Heart left ventricle (tissue), 16 donors: ENCODE measurements at regions of chr21 and their contacts with region 1.

Region 1: GRCh38 chr21:40615505-40616376 is 231.2 kb downstream of the DSCAM start:
- DNase-seq: no peak
- ATAC-seq: no peak
- H3K4me3 ChIP-seq: no peak overlapping the region
- H3K27ac ChIP-seq: no peak overlapping the region
- H3K4me1 ChIP-seq: no peaks in the 10 kb centered on the region
- H3K27me3 ChIP-seq: no peaks in the 10 kb centered on the region
- CTCF ChIP-seq: no peak
- POLR2A ChIP-seq: no peak

Region 2: DNA sequence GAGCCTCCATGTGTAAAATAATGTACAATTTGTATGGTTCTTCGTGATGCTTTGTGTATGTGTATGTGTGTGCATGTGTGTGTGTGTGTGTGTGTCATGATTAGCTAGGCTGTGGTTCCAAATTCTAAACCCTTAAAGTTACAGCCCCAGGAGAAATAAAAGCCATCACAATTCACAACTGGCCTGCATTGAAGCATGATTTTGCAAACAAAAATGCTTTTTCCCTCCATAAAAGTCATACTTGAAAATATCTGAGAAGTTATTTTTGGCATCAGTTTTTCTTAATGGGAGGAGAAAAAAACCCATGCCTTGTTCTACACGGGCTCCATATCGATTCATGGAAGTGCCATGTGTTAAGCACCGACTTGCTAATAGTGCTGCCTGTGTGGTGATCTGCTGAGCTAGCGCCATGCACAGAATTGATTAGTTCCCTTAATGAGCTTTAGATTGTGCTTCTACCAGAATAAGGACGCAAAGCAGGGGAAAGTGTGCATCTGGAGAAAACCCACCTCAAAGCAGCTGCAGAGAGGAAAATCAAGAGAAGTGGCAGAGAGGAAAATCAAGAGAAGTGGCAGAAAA is 24.0 kb after region 1 on chr21:
- intact Hi-C with region 1: loop called in 1 of 10 experiments (anchors 1 kb)
- DNase-seq: no peak
- ATAC-seq: no peak
- H3K4me3 ChIP-seq: no peak overlapping the region
- H3K27ac ChIP-seq: no peak overlapping the region
- H3K4me1 ChIP-seq: no peaks in the 10 kb centered on the region
- H3K27me3 ChIP-seq: peaks cover 0 to 8% (median 0%) of the 10 kb centered on the region in 9 donors
- CTCF ChIP-seq: no peak
- POLR2A ChIP-seq: no peak

Region 3: DNA sequence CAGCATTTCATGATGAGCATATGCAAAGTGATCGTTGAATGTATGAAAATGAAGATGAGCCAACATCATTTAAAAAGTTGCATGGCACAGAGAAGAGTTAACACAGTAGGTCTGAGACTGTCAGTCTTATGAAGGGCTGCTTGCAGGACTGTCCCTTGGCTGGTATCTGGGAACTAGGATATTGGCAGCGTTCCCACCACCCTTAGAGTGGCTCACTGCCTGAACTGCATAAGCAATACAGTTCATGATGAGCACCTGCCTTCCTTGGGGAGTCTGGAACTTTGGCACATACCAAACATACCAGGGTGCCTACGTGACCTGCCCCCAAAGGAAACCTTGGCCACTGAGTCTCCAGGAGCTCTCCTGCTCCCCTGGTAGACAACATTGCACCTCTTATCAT is 69.4 kb after region 1 on chr21:
- intact Hi-C with region 1: no loop called
- DNase-seq: peak in 4 of 5 donors; percentile 24 to 40 (median 34)
- ATAC-seq: peak; percentile 58 to 78 (median 60)
- H3K4me3 ChIP-seq: no peak overlapping the region
- H3K27ac ChIP-seq: no peak overlapping the region
- H3K4me1 ChIP-seq: no peaks in the 10 kb centered on the region
- H3K27me3 ChIP-seq: peaks cover 0 to 3% (median 0%) of the 10 kb centered on the region in 9 donors
- CTCF ChIP-seq: no peak
- POLR2A ChIP-seq: no peak

Region 4: DNA sequence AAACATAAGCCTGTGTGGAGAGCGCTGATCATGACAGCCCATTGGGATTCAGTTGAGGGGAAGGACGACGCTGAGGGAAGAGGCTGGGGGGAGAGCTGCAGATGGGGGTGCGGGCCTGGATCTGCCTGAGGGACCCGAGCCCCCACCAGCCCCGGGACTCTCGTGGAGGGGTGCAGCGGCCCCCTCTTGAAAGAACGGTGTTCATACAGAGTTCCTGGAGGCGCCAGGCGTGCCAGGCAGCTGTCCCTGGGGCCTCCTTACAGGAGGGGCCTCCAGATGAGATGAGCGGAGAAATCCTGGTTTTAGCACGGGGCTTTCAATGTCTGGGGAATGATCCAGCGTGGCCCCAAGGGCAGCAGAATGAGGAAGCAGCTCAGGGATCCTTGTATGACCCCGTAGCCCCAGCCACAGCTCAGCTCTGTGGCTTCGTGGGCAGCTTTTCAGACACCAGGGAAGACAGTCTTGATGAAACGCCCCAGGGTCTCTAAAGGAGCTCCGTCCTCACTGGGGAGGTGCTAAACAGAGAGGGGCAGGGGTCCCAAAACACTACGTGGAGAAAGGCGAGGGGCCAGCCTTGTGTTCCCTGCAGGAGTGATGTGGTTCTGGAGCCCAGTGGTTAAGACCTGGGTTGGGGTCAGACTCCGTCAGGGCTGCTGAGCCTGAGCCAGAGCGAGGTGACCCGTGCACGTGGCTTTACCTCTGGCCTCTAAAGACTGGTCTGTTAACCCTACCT is 238.4 kb after region 1 on chr21:
- intact Hi-C with region 1: no loop called
- DNase-seq: peak in 1 of 5 donors; percentile 26
- ATAC-seq: peak in 1 of 4 donors; percentile 53
- H3K4me3 ChIP-seq: no peak overlapping the region
- H3K27ac ChIP-seq: no peak overlapping the region
- H3K4me1 ChIP-seq: no peaks in the 10 kb centered on the region
- H3K27me3 ChIP-seq: peaks cover 0 to 16% (median 0%) of the 10 kb centered on the region in 9 donors
- CTCF ChIP-seq: no peak
- POLR2A ChIP-seq: no peak